CD4-positive, alpha-beta T cell (primary cell): ENCODE measurements at regions of chr1 and their contacts with region 1.

Region 1: GRCh38 chr1:202462342-202463076 is 114.0 kb downstream of the PPP1R12B start:
- DNase-seq: no peak
- ATAC-seq: no peak
- H3K4me3 ChIP-seq: no peak overlapping the region
- H3K4me3 Mint-ChIP-seq: no peak overlapping the region
- H3K27ac ChIP-seq: no peak overlapping the region
- H3K27ac Mint-ChIP-seq: no peak overlapping the region
- H3K4me1 ChIP-seq: no peaks in the 10 kb centered on the region
- H3K4me1 Mint-ChIP-seq: no peaks in the 10 kb centered on the region
- H3K27me3 ChIP-seq: no peaks in the 10 kb centered on the region
- H3K27me3 Mint-ChIP-seq: no peaks in the 10 kb centered on the region
- CTCF ChIP-seq: no peak

Region 2: GRCh38 chr1:201970334-201971159 is 492.0 kb before region 1 on chr1:
- CTCF ChIA-PET with region 1: no interaction called
- POLR2A ChIA-PET with region 1: no interaction called
- intact Hi-C with region 1: no loop called
- DNase-seq: no peak
- ATAC-seq: no peak
- H3K4me3 ChIP-seq: no peak overlapping the region
- H3K4me3 Mint-ChIP-seq: no peak overlapping the region
- H3K27ac ChIP-seq: no peak overlapping the region
- H3K27ac Mint-ChIP-seq: no peak overlapping the region
- H3K4me1 ChIP-seq: peaks cover 3% of the 10 kb centered on the region
- H3K4me1 Mint-ChIP-seq: no peaks in the 10 kb centered on the region
- H3K27me3 ChIP-seq: no peaks in the 10 kb centered on the region
- H3K27me3 Mint-ChIP-seq: no peaks in the 10 kb centered on the region
- CTCF ChIP-seq: no peak

Region 3: GRCh38 chr1:202291961-202292712 is 170.4 kb before region 1 on chr1:
- CTCF ChIA-PET with region 1: no interaction called
- POLR2A ChIA-PET with region 1: no interaction called
- intact Hi-C with region 1: no loop called
- DNase-seq: no peak
- ATAC-seq: no peak
- H3K4me3 ChIP-seq: no peak overlapping the region
- H3K4me3 Mint-ChIP-seq: no peak overlapping the region
- H3K27ac ChIP-seq: no peak overlapping the region
- H3K27ac Mint-ChIP-seq: no peak overlapping the region
- H3K4me1 ChIP-seq: peaks cover 19% of the 10 kb centered on the region
- H3K4me1 Mint-ChIP-seq: peaks cover 22% of the 10 kb centered on the region
- H3K27me3 ChIP-seq: no peaks in the 10 kb centered on the region
- H3K27me3 Mint-ChIP-seq: no peaks in the 10 kb centered on the region
- CTCF ChIP-seq: no peak

Region 4: DNA sequence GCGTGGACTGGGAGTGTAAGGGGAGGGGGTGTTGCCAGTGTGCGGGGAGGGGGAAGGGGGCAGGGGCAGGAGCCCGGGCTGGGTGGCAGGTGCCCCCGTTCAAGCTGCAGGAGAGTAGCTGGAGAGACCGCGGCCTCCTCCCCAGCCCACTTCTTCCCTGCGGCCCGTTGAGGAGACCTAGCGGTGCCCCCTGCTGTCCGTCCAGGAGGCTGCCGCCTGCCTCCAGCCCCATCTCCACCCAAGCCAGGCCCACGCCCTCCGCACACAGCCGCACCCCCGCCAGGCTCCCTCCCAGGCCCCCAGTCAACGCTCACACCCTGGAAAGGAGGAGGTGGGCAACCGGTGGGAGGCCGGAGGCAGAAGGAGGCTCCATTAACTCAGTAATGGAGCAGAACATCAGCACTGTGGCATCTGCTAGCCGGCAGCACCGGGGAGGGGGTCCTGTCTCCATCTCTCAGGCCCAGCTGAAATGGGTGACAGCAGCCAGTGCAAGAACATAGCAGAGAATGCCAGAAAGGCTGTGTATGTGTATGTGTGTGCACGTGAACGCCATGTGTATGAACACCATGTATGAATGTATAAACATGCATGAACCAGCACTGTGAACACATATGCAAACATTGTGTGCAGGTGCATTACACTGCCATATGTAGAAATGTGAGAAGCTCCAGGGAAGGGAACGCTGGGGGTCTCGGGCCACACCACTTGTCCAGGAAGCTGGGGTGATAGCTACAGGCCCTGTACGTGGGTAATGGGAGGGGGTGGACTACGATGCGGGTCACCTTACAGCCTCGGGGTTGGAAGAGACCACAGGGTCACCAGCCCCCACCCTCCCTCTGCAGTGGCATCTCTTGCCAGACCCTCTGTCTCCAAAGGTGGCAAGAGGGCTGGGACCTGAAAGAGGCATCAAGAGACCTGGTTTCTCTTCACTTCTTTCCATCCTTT is 163.2 kb after region 1 on chr1:
- CTCF ChIA-PET with region 1: no interaction called
- POLR2A ChIA-PET with region 1: no interaction called
- intact Hi-C with region 1: loop called in 1 of 2 experiments (anchors 2 kb)
- DNase-seq: peak; percentile 29 to 76 (median 45)
- ATAC-seq: peak; percentile 60
- H3K4me3 ChIP-seq: no peak overlapping the region
- H3K4me3 Mint-ChIP-seq: no peak overlapping the region
- H3K27ac ChIP-seq: no peak overlapping the region
- H3K27ac Mint-ChIP-seq: no peak overlapping the region
- H3K4me1 ChIP-seq: peaks cover 53% of the 10 kb centered on the region
- H3K4me1 Mint-ChIP-seq: peaks cover 36% of the 10 kb centered on the region
- H3K27me3 ChIP-seq: peaks cover 3 to 5% of the 10 kb centered on the region in 2 experiments
- H3K27me3 Mint-ChIP-seq: peaks cover 27% of the 10 kb centered on the region
- CTCF ChIP-seq: peak; percentile 58

Region 5: DNA sequence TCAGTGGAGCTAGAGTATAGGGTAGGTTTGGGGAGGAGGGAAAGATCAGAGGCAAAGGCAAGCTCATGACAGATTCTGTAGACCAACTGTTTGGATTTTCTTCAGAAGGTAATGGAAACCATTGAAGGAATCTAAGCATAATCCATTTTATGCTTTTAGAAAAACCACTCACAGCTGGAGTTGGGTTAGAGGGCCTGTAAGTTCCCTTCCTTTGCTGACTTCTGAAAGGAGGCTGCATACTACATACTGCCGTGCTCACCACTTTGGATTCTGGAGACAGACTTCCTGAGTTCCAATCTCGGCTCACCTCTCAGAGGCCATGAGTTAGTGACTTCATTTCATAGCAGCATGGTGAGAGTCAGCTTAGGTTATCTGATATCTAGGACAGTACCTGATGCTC is 254.1 kb after region 1 on chr1:
- CTCF ChIA-PET with region 1: interaction called, 41 read pairs
- POLR2A ChIA-PET with region 1: interaction called, 3 read pairs
- intact Hi-C with region 1: loop called (anchors 1 to 2 kb)
- DNase-seq: no peak
- ATAC-seq: no peak
- H3K4me3 ChIP-seq: no peak overlapping the region
- H3K4me3 Mint-ChIP-seq: no peak overlapping the region
- H3K27ac ChIP-seq: no peak overlapping the region
- H3K27ac Mint-ChIP-seq: no peak overlapping the region
- H3K4me1 ChIP-seq: no peaks in the 10 kb centered on the region
- H3K4me1 Mint-ChIP-seq: peaks cover 4% of the 10 kb centered on the region
- H3K27me3 ChIP-seq: peaks cover 8 to 19% of the 10 kb centered on the region in 2 experiments
- H3K27me3 Mint-ChIP-seq: peaks cover 17% of the 10 kb centered on the region
- CTCF ChIP-seq: no peak

Region 6: GRCh38 chr1:202750758-202751157 is 288.2 kb after region 1 on chr1:
- CTCF ChIA-PET with region 1: no interaction called
- POLR2A ChIA-PET with region 1: no interaction called
- intact Hi-C with region 1: no loop called
- DNase-seq: peak in 2 of 14 experiments; percentile 12 to 17
- ATAC-seq: no peak
- H3K4me3 ChIP-seq: no peak overlapping the region
- H3K4me3 Mint-ChIP-seq: no peak overlapping the region
- H3K27ac ChIP-seq: no peak overlapping the region
- H3K27ac Mint-ChIP-seq: no peak overlapping the region
- H3K4me1 ChIP-seq: no peaks in the 10 kb centered on the region
- H3K4me1 Mint-ChIP-seq: no peaks in the 10 kb centered on the region
- H3K27me3 ChIP-seq: no peaks in the 10 kb centered on the region
- H3K27me3 Mint-ChIP-seq: no peaks in the 10 kb centered on the region
- CTCF ChIP-seq: peak; percentile 18

Region 7: GRCh38 chr1:202788800-202789199 is 326.3 kb after region 1 on chr1:
- CTCF ChIA-PET with region 1: no interaction called
- POLR2A ChIA-PET with region 1: no interaction called
- intact Hi-C with region 1: loop called in 1 of 2 experiments (anchors 10 kb)
- DNase-seq: no peak
- ATAC-seq: no peak
- H3K4me3 ChIP-seq: no peak overlapping the region
- H3K4me3 Mint-ChIP-seq: no peak overlapping the region
- H3K27ac ChIP-seq: no peak overlapping the region
- H3K27ac Mint-ChIP-seq: no peak overlapping the region
- H3K4me1 ChIP-seq: peaks cover 5% of the 10 kb centered on the region
- H3K4me1 Mint-ChIP-seq: peaks cover 52% of the 10 kb centered on the region
- H3K27me3 ChIP-seq: no peaks in the 10 kb centered on the region
- H3K27me3 Mint-ChIP-seq: no peaks in the 10 kb centered on the region
- CTCF ChIP-seq: no peak

Region 8: GRCh38 chr1:202998836-202999750 is 536.6 kb after region 1 on chr1:
- CTCF ChIA-PET with region 1: interaction called, 3 read pairs
- POLR2A ChIA-PET with region 1: no interaction called
- intact Hi-C with region 1: loop called (anchors 10 kb)
- DNase-seq: peak; percentile 29 to 83 (median 58)
- ATAC-seq: peak; percentile 59
- H3K4me3 ChIP-seq: no peak overlapping the region
- H3K4me3 Mint-ChIP-seq: no peak overlapping the region
- H3K27ac ChIP-seq: no peak overlapping the region
- H3K27ac Mint-ChIP-seq: no peak overlapping the region
- H3K4me1 ChIP-seq: peaks cover 4% of the 10 kb centered on the region
- H3K4me1 Mint-ChIP-seq: peaks cover 7% of the 10 kb centered on the region
- H3K27me3 ChIP-seq: peaks cover 0 to 14% of the 10 kb centered on the region in 2 experiments
- H3K27me3 Mint-ChIP-seq: peaks cover 33% of the 10 kb centered on the region
- CTCF ChIP-seq: peak; percentile 91